ENCODE measurements at regions of chr1 and their contacts with region 1.

Region 1: DNA sequence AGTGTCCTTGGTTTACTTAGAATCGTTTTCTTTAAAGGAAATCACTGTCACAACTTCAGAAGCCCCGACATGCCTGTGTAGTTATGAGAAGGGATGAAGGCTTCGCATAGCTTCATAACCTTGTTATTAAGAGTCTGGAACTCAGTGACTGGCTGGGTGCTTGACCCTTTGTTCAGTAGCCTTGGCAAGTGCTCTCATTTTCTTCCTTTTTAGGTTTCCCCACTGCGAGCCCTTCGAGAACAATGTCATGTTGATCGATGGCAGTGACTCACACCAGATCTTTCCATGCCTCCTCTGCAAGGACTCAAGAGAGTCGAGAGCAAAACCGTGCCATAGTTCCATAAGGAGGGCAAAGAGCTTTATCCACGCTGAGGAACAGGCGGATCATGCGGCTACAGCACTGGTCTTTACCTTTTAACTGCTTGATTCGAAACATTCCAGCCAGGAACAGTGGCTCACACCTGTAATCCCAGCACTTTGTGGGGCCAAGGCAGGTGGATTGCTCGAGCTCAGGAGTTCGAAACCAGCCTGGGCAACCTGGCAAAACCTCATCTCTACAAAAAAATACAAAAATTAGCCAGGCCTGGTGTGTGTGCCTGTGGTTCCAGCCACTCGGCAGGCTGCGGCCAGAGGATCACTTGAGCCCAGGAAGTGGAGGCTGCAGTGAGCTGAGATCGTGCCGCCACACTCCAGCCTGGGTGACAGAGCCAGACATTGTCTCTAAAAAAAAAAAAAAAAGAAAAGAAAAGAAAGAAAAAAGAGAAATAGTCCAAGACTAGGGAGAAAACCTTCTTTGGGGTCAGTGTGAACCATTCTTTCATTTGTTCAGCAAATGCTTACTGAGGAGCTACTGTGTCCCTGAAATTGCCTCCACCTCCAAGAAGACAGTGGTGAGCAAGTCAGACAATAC is 95.4 kb upstream of the ERRFI1 start:
- DNase-seq: peak; percentile 91
- ATAC-seq: peak; percentile 63
- H3K4me3 ChIP-seq: peak overlapping the region in 1 of 3 experiments; percentile 21; a peak in 3 of 6 replicates
- H3K27ac ChIP-seq: peak overlapping the region; percentile 97
- H3K4me1 ChIP-seq: peaks cover 72% of the 10 kb centered on the region
- H3K27me3 ChIP-seq: no peaks in the 10 kb centered on the region
- CTCF ChIP-seq: no peak
- EP300 ChIP-seq: no peak
- POLR2A ChIP-seq: peak; percentile 39 to 50; a peak in 2 of 4 replicates
- RAD21 ChIP-seq: no peak

Region 2: GRCh38 chr1:7993593-7994479 is 127.7 kb before region 1 on chr1:
- CTCF ChIA-PET with region 1: no interaction called
- POLR2A ChIA-PET with region 1: no interaction called
- in situ Hi-C with region 1: no loop called
- intact Hi-C with region 1: no loop called
- DNase-seq: no peak
- ATAC-seq: no peak
- H3K4me3 ChIP-seq: no peak overlapping the region
- H3K27ac ChIP-seq: no peak overlapping the region
- H3K4me1 ChIP-seq: no peaks in the 10 kb centered on the region
- H3K27me3 ChIP-seq: no peaks in the 10 kb centered on the region
- CTCF ChIP-seq: no peak
- EP300 ChIP-seq: no peak
- POLR2A ChIP-seq: no peak
- RAD21 ChIP-seq: no peak

Region 3: GRCh38 chr1:8040586-8040985 is 80.9 kb before region 1 on chr1:
- CTCF ChIA-PET with region 1: no interaction called
- POLR2A ChIA-PET with region 1: interaction called, 12 read pairs
- in situ Hi-C with region 1: loop called (anchors 25 kb)
- intact Hi-C with region 1: loop called (anchors 2 kb)
- DNase-seq: peak; percentile 96
- ATAC-seq: peak; percentile 88
- H3K4me3 ChIP-seq: no peak overlapping the region
- H3K27ac ChIP-seq: peak overlapping the region; percentile 28
- H3K4me1 ChIP-seq: peaks cover 29% of the 10 kb centered on the region
- H3K27me3 ChIP-seq: no peaks in the 10 kb centered on the region
- CTCF ChIP-seq: no peak
- EP300 ChIP-seq: peak in 1 of 2 experiments; percentile 83; a peak in 2 of 4 replicates
- POLR2A ChIP-seq: no peak
- RAD21 ChIP-seq: no peak

Region 4: GRCh38 chr1:8097077-8097799 is 24.3 kb before region 1 on chr1:
- CTCF ChIA-PET with region 1: no interaction called
- POLR2A ChIA-PET with region 1: interaction called, 34 read pairs
- in situ Hi-C with region 1: no loop called
- intact Hi-C with region 1: no loop called
- DNase-seq: peak; percentile 74
- ATAC-seq: peak; percentile 49
- H3K4me3 ChIP-seq: no peak overlapping the region
- H3K27ac ChIP-seq: peak overlapping the region; percentile 72
- H3K4me1 ChIP-seq: peaks cover 67% of the 10 kb centered on the region
- H3K27me3 ChIP-seq: no peaks in the 10 kb centered on the region
- CTCF ChIP-seq: no peak
- EP300 ChIP-seq: peak in 1 of 2 experiments; percentile 56; a peak in 1 of 4 replicates
- POLR2A ChIP-seq: no peak
- RAD21 ChIP-seq: no peak

Region 5: DNA sequence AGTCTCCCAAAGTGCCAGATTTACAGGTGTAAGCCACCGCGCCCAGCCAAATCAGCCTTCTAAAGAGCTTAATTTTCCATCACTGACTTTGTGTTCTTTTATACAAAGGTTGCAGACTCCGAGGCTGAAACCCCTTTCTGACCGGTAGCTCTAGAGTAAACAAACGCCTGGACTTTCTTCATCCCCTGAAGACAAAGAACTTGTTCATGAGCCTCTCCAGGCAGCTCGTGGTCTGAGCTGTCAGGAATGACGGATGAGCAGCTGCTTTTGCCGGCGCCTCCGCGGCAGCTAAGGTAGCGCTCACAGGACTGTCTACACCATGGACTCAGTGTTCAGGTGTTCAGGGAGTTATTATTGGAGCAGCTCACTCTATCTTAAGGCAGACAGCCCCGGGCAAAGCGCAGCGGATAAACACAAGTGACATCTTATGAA is 33.1 kb after region 1 on chr1:
- CTCF ChIA-PET with region 1: no interaction called
- POLR2A ChIA-PET with region 1: interaction called, 64 read pairs
- in situ Hi-C with region 1: no loop called
- intact Hi-C with region 1: loop called (anchors 2 kb)
- DNase-seq: peak; percentile 99
- ATAC-seq: peak; percentile 97
- H3K4me3 ChIP-seq: peak overlapping the region in 2 of 3 experiments; percentile 15 to 31; a peak in 2 of 6 replicates
- H3K27ac ChIP-seq: peak overlapping the region; percentile 88
- H3K4me1 ChIP-seq: peaks cover 82% of the 10 kb centered on the region
- H3K27me3 ChIP-seq: no peaks in the 10 kb centered on the region
- CTCF ChIP-seq: no peak
- EP300 ChIP-seq: peak; percentile 89 to 97; a peak in 3 of 4 replicates
- POLR2A ChIP-seq: peak in 1 of 2 experiments; percentile 16; a peak in 1 of 4 replicates
- RAD21 ChIP-seq: peak; percentile 44; the same call in 1 of the 2 replicates

Region 6: GRCh38 chr1:8189931-8190483 is 68.5 kb after region 1 on chr1:
- CTCF ChIA-PET with region 1: no interaction called
- POLR2A ChIA-PET with region 1: interaction called, 16 read pairs
- in situ Hi-C with region 1: no loop called
- intact Hi-C with region 1: no loop called
- DNase-seq: peak; percentile 100
- ATAC-seq: peak; percentile 100
- H3K4me3 ChIP-seq: no peak overlapping the region
- H3K27ac ChIP-seq: peak overlapping the region; percentile 74
- H3K4me1 ChIP-seq: peaks cover 78% of the 10 kb centered on the region
- H3K27me3 ChIP-seq: no peaks in the 10 kb centered on the region
- CTCF ChIP-seq: peak; percentile 8; the same call in 1 of the 2 replicates
- EP300 ChIP-seq: peak; percentile 87 to 97
- POLR2A ChIP-seq: peak in 1 of 2 experiments; percentile 47; a peak in 1 of 4 replicates
- RAD21 ChIP-seq: peak; percentile 65

Region 7: GRCh38 chr1:8238851-8239305 is 117.4 kb after region 1 on chr1:
- CTCF ChIA-PET with region 1: no interaction called
- POLR2A ChIA-PET with region 1: interaction called, 7 read pairs
- in situ Hi-C with region 1: no loop called
- intact Hi-C with region 1: loop called (anchors 1 kb)
- DNase-seq: peak; percentile 79
- ATAC-seq: peak; percentile 57
- H3K4me3 ChIP-seq: peak overlapping the region in 2 of 3 experiments; percentile 2 to 42; a peak in 3 of 6 replicates
- H3K27ac ChIP-seq: peak overlapping the region; percentile 84
- H3K4me1 ChIP-seq: peaks cover 58% of the 10 kb centered on the region
- H3K27me3 ChIP-seq: no peaks in the 10 kb centered on the region
- CTCF ChIP-seq: peak; percentile 53; the same call in 1 of the 2 replicates
- EP300 ChIP-seq: no peak; a peak in 1 of 4 replicates
- POLR2A ChIP-seq: no peak
- RAD21 ChIP-seq: no peak